ENCODE measurements at regions of chr16 and their contacts with region 1.

Region 1: GRCh38 chr16:9090960-9091866 is at the start of gene HAPSTR1:
- DNase-seq: peak; percentile 95
- ATAC-seq: peak; percentile 84
- H3K4me3 Mint-ChIP-seq: peak within 1 kb of the TSS; percentile 99
- H3K27ac Mint-ChIP-seq: peak within 1 kb of the TSS; percentile 98
- H3K4me1 Mint-ChIP-seq: peaks cover 51% of the 10 kb centered on the region
- H3K27me3 Mint-ChIP-seq: no peaks in the 10 kb centered on the region
- CTCF ChIP-seq: no peak
- total RNA-seq, gene HAPSTR1: 77.0 and 85.6 TPM in 2 replicates

Region 2: GRCh38 chr16:8814095-8814806 is 277.0 kb before region 1 on chr16:
- CTCF ChIA-PET with region 1: no interaction called
- POLR2A ChIA-PET with region 1: no interaction called
- intact Hi-C with region 1: no loop called
- DNase-seq: no peak
- ATAC-seq: no peak
- H3K4me3 Mint-ChIP-seq: no peak overlapping the region
- H3K27ac Mint-ChIP-seq: no peak overlapping the region
- H3K4me1 Mint-ChIP-seq: peaks cover 14% of the 10 kb centered on the region
- H3K27me3 Mint-ChIP-seq: no peaks in the 10 kb centered on the region
- CTCF ChIP-seq: no peak

Region 3: DNA sequence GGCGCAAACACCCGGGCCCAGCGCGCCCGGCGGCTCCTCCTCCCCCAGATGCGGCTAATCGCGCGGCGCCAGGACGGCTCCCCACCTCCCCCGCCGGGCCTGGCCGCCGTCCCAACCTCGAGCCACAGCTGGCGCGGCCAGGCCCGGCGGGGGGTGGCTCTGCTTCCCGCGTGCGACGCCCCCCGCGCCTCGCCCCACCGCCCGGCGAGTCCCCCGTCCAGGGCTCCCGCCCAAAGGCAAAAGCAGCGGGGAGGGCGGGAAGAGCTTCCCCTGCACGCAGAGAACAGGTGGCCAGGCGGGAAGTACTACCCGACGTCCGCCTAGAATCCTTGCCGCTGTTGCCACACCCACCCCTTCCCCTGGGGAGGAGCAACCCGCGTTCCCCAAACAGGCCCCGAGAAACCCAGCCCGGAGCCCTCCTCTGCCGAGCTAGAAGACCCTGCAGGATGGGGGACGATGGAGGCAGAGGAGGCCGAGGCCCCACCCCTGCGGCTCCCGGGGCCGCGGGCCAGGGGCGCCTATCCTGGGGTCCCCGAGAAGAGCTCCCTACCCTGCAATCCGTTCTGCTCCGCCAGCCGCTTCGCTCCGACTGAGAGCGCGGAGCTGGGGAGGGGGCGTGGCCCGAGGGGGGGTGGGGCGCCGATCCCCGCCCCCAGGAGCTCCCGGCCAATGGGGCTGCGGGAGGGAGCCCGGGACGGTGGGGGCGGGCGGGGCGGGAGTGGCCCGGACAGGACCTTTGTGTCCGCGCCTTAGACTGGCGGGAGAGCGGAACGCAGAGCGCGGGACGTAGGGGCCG is 222.6 kb before region 1 on chr16 and contains the start of gene CARHSP1:
- CTCF ChIA-PET with region 1: no interaction called
- POLR2A ChIA-PET with region 1: interaction called, 32 read pairs
- intact Hi-C with region 1: no loop called
- DNase-seq: peak; percentile 77
- ATAC-seq: peak; percentile 79
- H3K4me3 Mint-ChIP-seq: peak within 1 kb of the TSS; percentile 93
- H3K27ac Mint-ChIP-seq: peak within 1 kb of the TSS; percentile 85
- H3K4me1 Mint-ChIP-seq: peaks cover 60% of the 10 kb centered on the region
- H3K27me3 Mint-ChIP-seq: no peaks in the 10 kb centered on the region
- CTCF ChIP-seq: no peak
- total RNA-seq, gene CARHSP1: 21.3 and 27.0 TPM in 2 replicates

Region 4: DNA sequence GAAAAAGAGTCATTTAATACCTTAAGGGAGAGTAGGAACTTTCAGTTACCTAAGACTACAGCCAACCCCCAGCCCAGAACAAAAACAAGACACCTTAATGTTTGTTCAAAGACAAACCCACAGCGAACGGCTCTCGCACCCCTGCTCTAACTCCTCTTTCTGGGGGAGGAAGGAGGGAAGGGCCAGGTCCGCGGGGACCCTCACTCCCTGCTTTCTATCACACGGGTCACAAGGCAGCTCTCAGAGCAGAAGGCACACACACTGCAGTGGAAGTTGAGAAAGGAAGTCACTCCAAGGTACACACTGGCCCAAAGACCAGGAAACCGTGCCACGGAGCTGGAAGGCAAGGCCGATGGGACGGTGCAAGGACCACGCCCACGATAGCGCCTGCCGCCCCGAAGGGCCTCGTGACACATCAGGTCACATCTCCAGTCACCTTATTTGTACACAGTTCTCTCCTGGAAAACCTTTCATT is 199.1 kb before region 1 on chr16:
- CTCF ChIA-PET with region 1: interaction called, 7 read pairs
- POLR2A ChIA-PET with region 1: interaction called, 39 read pairs
- intact Hi-C with region 1: loop called (anchors 1 kb)
- DNase-seq: peak; percentile 34
- ATAC-seq: peak; percentile 5
- H3K4me3 Mint-ChIP-seq: peak overlapping the region; percentile 68
- H3K27ac Mint-ChIP-seq: peak overlapping the region; percentile 91
- H3K4me1 Mint-ChIP-seq: peaks cover 39% of the 10 kb centered on the region
- H3K27me3 Mint-ChIP-seq: no peaks in the 10 kb centered on the region
- CTCF ChIP-seq: no peak

Region 5: GRCh38 chr16:9008601-9009260 is 82.5 kb before region 1 on chr16:
- CTCF ChIA-PET with region 1: no interaction called
- POLR2A ChIA-PET with region 1: interaction called, 9 read pairs
- intact Hi-C with region 1: loop called (anchors 2 kb)
- DNase-seq: peak; percentile 50
- ATAC-seq: peak; percentile 91
- H3K4me3 Mint-ChIP-seq: peak overlapping the region; percentile 59
- H3K27ac Mint-ChIP-seq: peak overlapping the region; percentile 53
- H3K4me1 Mint-ChIP-seq: peaks cover 8% of the 10 kb centered on the region
- H3K27me3 Mint-ChIP-seq: peaks cover 29% of the 10 kb centered on the region
- CTCF ChIP-seq: no peak

Region 6: GRCh38 chr16:9072806-9073341 is 18.3 kb before region 1 on chr16:
- CTCF ChIA-PET with region 1: interaction called, 3 read pairs
- POLR2A ChIA-PET with region 1: interaction called, 145 read pairs
- intact Hi-C with region 1: no loop called
- DNase-seq: no peak
- ATAC-seq: peak; percentile 45
- H3K4me3 Mint-ChIP-seq: no peak overlapping the region
- H3K27ac Mint-ChIP-seq: peak overlapping the region; percentile 65
- H3K4me1 Mint-ChIP-seq: peaks cover 22% of the 10 kb centered on the region
- H3K27me3 Mint-ChIP-seq: no peaks in the 10 kb centered on the region
- CTCF ChIP-seq: no peak

Region 7: GRCh38 chr16:9123871-9124270 is 32.7 kb after region 1 on chr16:
- CTCF ChIA-PET with region 1: no interaction called
- POLR2A ChIA-PET with region 1: interaction called, 18 read pairs
- intact Hi-C with region 1: loop called (anchors 2 kb)
- DNase-seq: peak; percentile 55
- ATAC-seq: peak; percentile 91
- H3K4me3 Mint-ChIP-seq: peak overlapping the region; percentile 64
- H3K27ac Mint-ChIP-seq: peak overlapping the region; percentile 84
- H3K4me1 Mint-ChIP-seq: peaks cover 72% of the 10 kb centered on the region
- H3K27me3 Mint-ChIP-seq: no peaks in the 10 kb centered on the region
- CTCF ChIP-seq: no peak

Measured in activated B cell treated with CpG ODN at 0.5 μM for 24 hours (primary cell).